OCI-LY7 (cell line): ENCODE measurements at regions of chr16 and their contacts with region 1.

Region 1: GRCh38 chr16:67993189-67994039 is 5.9 kb downstream of the DPEP2 start:
- DNase-seq: peak; percentile 88
- H3K4me3 ChIP-seq: peak overlapping the region; percentile 45
- H3K27ac ChIP-seq: no peak overlapping the region
- H3K4me1 ChIP-seq: peaks cover 15% of the 10 kb centered on the region
- CTCF ChIP-seq: peak; percentile 95

Region 2: DNA sequence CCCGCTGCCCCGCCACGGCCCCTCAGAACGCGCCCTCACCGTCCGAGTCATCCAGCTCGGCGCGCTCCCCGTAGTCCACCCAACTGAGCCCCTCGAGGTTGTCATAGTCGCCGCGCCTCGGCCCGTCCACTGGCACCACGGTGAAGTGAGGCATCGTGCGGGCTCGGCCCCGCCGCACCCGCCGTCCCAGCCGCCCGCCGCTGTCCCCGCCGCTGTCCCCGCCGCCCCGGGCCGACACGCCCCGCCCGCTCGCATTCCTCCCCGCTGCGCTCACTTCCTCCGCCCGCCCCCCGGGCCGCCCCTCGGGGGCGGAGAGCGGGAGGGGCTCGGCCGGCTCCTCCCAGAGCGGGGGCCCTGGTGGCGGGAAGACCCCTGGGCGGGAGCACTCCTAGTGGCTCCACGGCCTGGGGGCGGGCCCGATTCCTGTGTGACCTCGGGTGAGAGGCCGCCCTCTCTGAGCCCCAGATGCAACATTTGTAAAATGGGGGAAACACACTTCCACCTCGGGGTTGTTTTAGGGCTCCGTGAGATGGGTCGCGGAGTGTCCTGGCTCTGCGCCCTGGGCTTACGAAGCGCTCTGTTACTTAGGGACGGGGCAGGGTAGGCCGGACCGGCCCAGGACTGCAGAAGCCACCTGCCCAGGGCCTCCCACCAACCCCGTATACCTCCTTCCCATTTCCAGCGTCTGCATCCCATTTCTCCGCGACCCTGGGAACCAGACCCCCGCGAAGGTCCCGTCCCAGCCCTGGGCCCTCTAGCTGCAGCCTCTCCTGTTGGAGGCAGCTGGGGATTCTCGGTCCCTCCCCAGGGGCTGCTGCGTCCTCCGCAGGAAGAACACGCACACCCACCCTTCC is 24.8 kb before region 1 on chr16 and contains the start of gene SLC12A4:
- CTCF ChIA-PET with region 1: no interaction called
- POLR2A ChIA-PET with region 1: no interaction called
- intact Hi-C with region 1: loop called (anchors 1 kb)
- DNase-seq: peak; percentile 89
- H3K4me3 ChIP-seq: peak within 1 kb of the TSS; percentile 86
- H3K27ac ChIP-seq: no peak within 1 kb of the TSS
- H3K4me1 ChIP-seq: peaks cover 34% of the 10 kb centered on the region
- CTCF ChIP-seq: no peak
- total RNA-seq, gene SLC12A4: 8.3 and 10.0 TPM in 2 replicates

Region 3: DNA sequence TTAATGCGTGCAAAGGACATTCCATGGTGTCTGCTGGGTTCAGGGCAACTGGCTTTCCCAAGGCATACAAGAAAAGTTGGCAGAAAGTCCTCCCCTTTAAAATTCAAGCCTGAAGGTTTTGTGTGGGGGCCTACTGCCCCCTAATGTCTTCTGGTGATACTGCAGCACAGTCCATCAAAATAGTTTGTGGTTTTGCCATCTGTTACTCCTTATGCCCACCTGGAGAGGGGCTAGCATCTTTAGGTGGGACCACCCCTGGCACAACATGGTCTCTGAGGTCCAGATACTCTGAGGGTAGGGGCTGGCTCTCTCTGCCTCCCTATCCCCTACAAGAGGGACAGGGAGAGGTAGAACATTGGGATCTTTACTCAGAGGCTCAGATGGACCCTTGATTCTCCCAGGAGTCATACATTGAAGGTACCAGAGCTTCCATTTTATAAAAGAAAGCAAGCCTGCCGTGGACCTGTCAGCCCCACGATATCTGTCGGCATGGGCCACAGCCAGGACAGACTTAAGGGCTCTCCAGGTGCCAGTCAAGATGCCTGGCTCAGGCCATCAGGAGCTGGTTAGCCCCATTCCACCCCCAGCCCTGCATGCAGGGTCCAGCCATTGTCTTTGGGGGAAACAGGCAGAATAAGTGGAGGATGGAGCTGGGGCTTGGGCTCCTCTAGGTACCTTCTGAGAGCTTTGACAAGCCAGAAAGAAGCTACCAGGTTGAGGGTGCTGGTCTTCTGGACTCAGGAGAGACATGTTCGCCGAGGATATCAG is 236.2 kb after region 1 on chr16:
- CTCF ChIA-PET with region 1: no interaction called
- POLR2A ChIA-PET with region 1: no interaction called
- intact Hi-C with region 1: loop called (anchors 1 kb)
- DNase-seq: peak; percentile 71
- H3K4me3 ChIP-seq: no peak overlapping the region
- H3K27ac ChIP-seq: no peak overlapping the region
- H3K4me1 ChIP-seq: peaks cover 44% of the 10 kb centered on the region
- CTCF ChIP-seq: peak; percentile 97